ENCODE measurements at regions of chr1 and their contacts with region 1.

Region 1: DNA sequence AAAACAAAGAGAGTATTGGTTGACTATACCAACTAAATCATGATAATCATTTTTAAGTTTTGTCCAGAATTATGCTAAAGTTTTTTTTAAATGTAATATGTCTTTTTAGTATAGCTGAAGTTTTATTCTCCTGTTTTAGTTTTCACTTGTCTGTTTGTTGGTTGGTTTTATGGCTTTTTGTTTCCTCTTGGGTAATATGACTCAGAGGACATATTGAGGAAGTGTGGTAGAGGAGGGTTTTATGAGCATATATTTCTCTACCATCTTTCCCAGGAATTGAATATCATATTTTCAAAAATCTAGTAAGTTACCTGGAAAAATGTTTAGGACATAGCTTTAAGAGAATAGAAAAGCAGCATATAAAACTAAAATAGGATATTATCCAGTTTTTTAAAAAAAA is 68.6 kb upstream of the MCOLN3 start:
- DNase-seq: no peak
- H3K4me3 ChIP-seq: no peak overlapping the region
- H3K27ac ChIP-seq: no peak overlapping the region
- H3K4me1 ChIP-seq: no peaks in the 10 kb centered on the region
- H3K27me3 ChIP-seq: no peaks in the 10 kb centered on the region
- CTCF ChIP-seq: no peak
- EP300 ChIP-seq: no peak
- POLR2A ChIP-seq: no peak

Region 2: GRCh38 chr1:84712276-84712874 is 404.5 kb before region 1 on chr1:
- intact Hi-C with region 1: no loop called
- DNase-seq: no peak
- H3K4me3 ChIP-seq: no peak overlapping the region
- H3K27ac ChIP-seq: no peak overlapping the region
- H3K4me1 ChIP-seq: no peaks in the 10 kb centered on the region
- H3K27me3 ChIP-seq: no peaks in the 10 kb centered on the region
- CTCF ChIP-seq: no peak
- EP300 ChIP-seq: no peak
- POLR2A ChIP-seq: no peak

Region 3: GRCh38 chr1:84973498-84974334 is 143.1 kb before region 1 on chr1:
- intact Hi-C with region 1: no loop called
- DNase-seq: no peak
- H3K4me3 ChIP-seq: no peak overlapping the region
- H3K27ac ChIP-seq: no peak overlapping the region
- H3K4me1 ChIP-seq: no peaks in the 10 kb centered on the region
- H3K27me3 ChIP-seq: no peaks in the 10 kb centered on the region
- CTCF ChIP-seq: no peak
- EP300 ChIP-seq: no peak
- POLR2A ChIP-seq: no peak

Region 4: DNA sequence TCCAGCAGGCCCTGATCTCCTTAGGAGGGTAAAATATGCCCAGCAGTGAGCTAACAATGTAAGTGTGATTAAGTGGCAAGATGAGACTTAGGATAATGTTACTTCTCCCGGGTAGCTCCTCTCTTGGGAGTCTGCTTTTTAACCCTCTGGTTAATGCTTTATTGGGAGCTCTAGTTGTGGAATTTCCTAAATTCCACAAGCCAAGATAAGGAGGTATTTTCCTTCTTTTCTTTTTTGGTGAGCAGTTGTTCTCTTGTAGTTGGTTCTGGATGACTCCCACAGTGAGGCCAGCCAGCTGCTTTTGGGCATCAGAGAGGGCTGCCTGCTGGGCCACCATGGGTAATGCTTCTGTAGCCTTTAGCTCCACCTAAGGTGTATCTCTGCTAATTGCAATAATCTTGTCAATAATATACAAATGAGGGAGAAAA is 123.3 kb after region 1 on chr1:
- intact Hi-C with region 1: loop called in 1 of 4 experiments (anchors 5 kb)
- DNase-seq: no peak
- H3K4me3 ChIP-seq: no peak overlapping the region
- H3K27ac ChIP-seq: no peak overlapping the region
- H3K4me1 ChIP-seq: peaks cover 1% of the 10 kb centered on the region
- H3K27me3 ChIP-seq: no peaks in the 10 kb centered on the region
- CTCF ChIP-seq: no peak
- EP300 ChIP-seq: no peak
- POLR2A ChIP-seq: no peak